ENCODE measurements at regions of chr2 and their contacts with region 1.

Region 1: DNA sequence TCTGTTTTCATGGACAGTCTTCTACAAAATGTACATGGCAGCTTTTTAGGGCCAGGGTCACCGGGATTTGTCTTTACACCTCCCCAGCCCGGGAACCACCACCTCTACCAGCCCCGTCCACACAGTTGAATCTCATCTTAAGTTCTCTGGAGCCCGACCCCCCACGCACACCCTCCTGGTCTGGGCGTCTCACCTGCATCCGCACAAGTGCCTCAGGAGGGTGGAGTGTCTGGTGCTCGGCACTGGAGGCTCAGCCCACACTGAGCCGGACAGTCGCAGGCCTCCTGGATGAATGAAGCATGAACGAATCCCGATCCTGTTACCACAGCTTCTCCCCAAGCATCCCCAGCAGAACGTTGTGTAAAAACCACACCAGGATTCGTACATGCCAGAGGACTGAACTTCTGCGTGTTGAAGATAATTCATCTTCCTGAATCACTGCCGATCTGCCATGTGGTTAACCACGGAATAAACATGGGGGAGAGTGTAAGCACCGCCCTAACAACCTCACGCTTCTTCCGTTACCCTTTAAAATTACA is 162.0 kb downstream of the RTP5 start:
- DNase-seq: peak in 8 of 9 donors; percentile 60 to 86 (median 81)
- ATAC-seq: peak; percentile 93
- H3K4me3 ChIP-seq: peak overlapping the region; percentile 85
- H3K4me3 Mint-ChIP-seq: peak overlapping the region; percentile 88 to 96 (median 92)
- H3K27ac ChIP-seq: peak overlapping the region; percentile 67
- H3K27ac Mint-ChIP-seq: peak overlapping the region; percentile 80 to 98 (median 93)
- H3K4me1 ChIP-seq: peaks cover 21 to 24% of the 10 kb centered on the region in 2 donors
- H3K4me1 Mint-ChIP-seq: peaks cover 18 to 70% (median 65%) of the 10 kb centered on the region in 7 donors
- H3K27me3 ChIP-seq: peaks cover 0 to 4% of the 10 kb centered on the region in 2 donors
- H3K27me3 Mint-ChIP-seq: peaks cover 0 to 47% (median 0%) of the 10 kb centered on the region in 5 donors

Region 2: DNA sequence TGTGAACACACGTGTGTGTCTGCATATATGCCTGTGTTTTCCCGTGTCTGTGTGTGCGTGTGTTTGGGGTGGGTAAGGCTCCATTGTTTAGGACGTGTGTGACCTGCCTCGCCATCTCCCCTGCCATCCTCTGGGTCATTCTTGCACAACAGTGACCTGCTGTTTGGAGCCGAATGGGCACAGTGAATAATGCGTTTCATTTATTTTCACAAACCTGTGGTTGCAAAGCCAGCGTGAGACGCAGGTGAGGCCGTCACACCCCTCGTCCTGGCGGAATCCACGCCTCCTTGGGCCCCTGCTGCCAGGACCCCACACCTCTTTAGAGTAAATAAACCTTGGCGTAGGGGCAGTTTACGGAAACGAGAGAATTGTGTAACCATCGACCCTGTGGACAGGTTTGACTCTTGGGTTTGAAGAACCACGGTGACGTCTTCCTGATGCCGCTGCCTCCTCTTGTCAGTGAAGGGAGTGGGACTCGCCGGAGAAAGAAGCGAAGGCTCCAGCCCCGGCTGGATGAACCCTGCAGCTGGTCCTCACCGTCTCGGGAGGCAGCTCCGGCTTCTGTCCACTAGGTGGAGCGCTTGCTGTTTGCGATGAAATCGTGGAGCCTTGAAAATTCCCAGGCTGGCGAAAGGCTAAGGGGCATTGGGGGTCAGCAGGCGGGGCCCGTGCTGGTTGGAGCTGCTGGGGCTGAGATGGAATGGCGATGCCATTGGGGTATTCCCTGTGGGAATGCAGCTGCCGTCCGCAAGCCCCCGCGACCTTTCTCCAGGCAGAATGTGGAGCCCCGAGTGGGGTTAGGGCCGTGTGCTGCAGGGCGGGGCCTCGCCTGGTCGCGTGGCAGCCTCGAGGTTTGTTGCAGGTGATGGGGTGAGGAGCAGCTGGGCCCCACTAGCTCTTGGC is 80.9 kb before region 1 on chr2:
- CTCF ChIA-PET with region 1: no interaction called
- POLR2A ChIA-PET with region 1: no interaction called
- intact Hi-C with region 1: loop called in 1 of 2 experiments (anchors 2 kb)
- DNase-seq: peak; percentile 16 to 59 (median 42)
- ATAC-seq: peak; percentile 69
- H3K4me3 ChIP-seq: no peak overlapping the region
- H3K4me3 Mint-ChIP-seq: no peak overlapping the region
- H3K27ac ChIP-seq: no peak overlapping the region
- H3K27ac Mint-ChIP-seq: no peak overlapping the region
- H3K4me1 ChIP-seq: no peaks in the 10 kb centered on the region
- H3K4me1 Mint-ChIP-seq: peaks cover 0 to 15% (median 10%) of the 10 kb centered on the region in 7 donors
- H3K27me3 ChIP-seq: no peaks in the 10 kb centered on the region
- H3K27me3 Mint-ChIP-seq: no peaks in the 10 kb centered on the region

Region 3: DNA sequence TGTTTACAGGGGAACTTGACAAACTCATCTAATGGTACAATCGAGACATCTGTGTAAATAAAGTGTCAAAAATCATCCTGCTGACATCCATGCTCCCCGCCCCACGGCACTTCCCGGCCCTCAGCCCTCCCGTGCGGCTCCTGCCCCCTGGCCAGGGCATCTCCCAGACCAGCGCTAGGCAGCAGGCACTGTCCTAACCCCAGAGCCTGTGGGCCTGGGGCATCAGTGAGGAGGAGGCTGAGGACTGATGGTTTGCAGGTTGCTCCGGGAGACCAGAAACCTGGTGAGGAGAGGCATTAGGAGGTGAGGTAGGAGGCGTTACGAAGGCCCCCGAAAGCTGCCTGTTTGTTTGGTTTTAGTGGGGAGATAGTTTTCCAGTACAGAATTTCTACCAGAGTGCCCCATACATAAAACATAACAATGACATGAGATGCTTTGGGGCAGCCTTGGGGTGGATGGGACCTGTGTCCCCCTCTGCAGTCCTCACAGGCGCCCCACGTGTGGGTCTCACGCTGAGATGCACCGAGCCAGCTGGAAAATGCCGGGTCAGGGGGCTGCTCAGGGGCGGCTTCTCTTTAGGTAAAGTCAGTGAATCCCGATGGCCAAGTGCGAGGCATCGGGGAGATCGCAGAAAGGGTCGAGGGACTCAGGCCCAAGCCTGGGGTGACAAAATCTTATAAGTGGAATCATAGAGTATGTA is 47.8 kb before region 1 on chr2:
- CTCF ChIA-PET with region 1: no interaction called
- POLR2A ChIA-PET with region 1: interaction called, 6 read pairs
- intact Hi-C with region 1: loop called in 1 of 2 experiments (anchors 1 kb)
- DNase-seq: no peak
- ATAC-seq: no peak
- H3K4me3 ChIP-seq: no peak overlapping the region
- H3K4me3 Mint-ChIP-seq: no peak overlapping the region
- H3K27ac ChIP-seq: no peak overlapping the region
- H3K27ac Mint-ChIP-seq: peak overlapping the region in 8 of 9 donors; percentile 21 to 95 (median 90)
- H3K4me1 ChIP-seq: peaks cover 13 to 14% of the 10 kb centered on the region in 2 donors
- H3K4me1 Mint-ChIP-seq: peaks cover 6 to 31% (median 23%) of the 10 kb centered on the region in 7 donors
- H3K27me3 ChIP-seq: no peaks in the 10 kb centered on the region
- H3K27me3 Mint-ChIP-seq: no peaks in the 10 kb centered on the region

Region 4: DNA sequence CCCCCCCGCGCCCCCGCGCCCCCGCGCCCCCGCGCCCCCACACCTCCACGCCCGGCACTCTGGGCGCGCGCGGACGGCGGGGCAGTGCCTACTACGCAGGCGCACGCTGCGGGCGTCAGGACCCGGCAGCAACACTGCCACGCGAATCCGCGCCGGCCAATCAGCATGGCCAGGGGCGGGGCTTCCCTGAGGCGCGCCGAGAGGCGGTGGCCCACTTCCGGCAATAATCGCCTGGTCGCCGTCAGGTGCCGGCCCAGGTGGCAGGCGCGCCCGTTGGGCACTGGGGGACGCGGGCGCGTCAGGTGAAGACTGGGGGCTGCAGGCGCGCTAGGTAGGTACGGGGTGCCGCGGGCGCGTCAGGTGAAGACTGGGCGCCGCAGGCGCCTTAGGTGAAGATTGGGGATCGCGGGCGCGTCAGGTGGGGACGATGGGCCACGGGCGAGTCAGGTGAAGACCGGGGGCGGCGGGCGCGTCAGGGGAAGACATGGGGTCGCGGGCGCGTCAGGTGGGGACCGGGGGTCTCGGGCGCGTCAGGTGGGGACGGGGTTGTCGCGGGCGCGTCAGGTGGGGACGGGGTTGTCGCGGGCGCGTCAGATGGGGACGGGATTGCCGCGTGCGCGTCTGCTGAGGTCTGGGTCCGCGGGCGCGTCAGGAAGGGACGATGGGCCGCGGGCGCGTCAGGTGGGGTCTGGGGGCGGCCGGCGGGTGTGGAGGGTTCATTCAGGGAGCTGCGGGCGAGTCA is 57.1 kb after region 1 on chr2:
- CTCF ChIA-PET with region 1: no interaction called
- POLR2A ChIA-PET with region 1: no interaction called
- intact Hi-C with region 1: loop called (anchors 1 to 2 kb)
- DNase-seq: peak; percentile 90 to 94 (median 92)
- ATAC-seq: peak; percentile 95
- H3K4me3 ChIP-seq: peak overlapping the region; percentile 55
- H3K4me3 Mint-ChIP-seq: peak overlapping the region; percentile 81 to 99 (median 88)
- H3K27ac ChIP-seq: peak overlapping the region; percentile 75
- H3K27ac Mint-ChIP-seq: peak overlapping the region; percentile 61 to 93 (median 89)
- H3K4me1 ChIP-seq: peaks cover 4 to 11% of the 10 kb centered on the region in 2 donors
- H3K4me1 Mint-ChIP-seq: peaks cover 27 to 57% (median 41%) of the 10 kb centered on the region in 7 donors
- H3K27me3 ChIP-seq: no peaks in the 10 kb centered on the region
- H3K27me3 Mint-ChIP-seq: peaks cover 0 to 18% (median 0%) of the 10 kb centered on the region in 5 donors

Measured in naive thymus-derived CD4-positive, alpha-beta T cell (primary cell).